A673 (cell line): ENCODE measurements at regions of chr14 and their contacts with region 1.

Region 1: GRCh38 chr14:52473557-52473956 is 78.7 kb downstream of the TXNDC16 start:
- DNase-seq: peak; percentile 29
- H3K4me3 ChIP-seq: no peak overlapping the region
- H3K27ac ChIP-seq: no peak overlapping the region
- H3K4me1 ChIP-seq: no peaks in the 10 kb centered on the region
- H3K27me3 ChIP-seq: no peaks in the 10 kb centered on the region
- CTCF ChIP-seq: peak; percentile 46; the same call in 1 of the 2 replicates

Region 2: DNA sequence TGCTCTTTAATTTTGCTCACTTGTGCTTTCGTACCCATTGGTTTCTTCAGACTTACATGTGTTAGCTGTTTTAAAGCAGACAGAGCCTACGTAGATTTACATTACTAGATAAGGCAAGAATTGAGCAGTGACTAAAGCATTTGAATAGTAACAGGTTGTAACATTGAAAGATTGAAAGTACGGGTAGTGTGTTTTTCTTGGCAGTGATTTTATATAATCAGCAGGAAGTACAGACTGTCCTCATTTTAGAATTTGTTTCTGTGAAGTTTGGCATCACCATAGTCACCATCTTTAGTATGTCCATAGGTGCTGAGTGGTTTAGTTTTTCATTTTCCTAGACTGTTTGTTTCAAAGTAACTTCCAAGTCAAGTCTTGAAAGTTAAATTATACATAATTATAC is 470.2 kb before region 1 on chr14:
- CTCF ChIA-PET with region 1: no interaction called
- POLR2A ChIA-PET with region 1: no interaction called
- intact Hi-C with region 1: loop called (anchors 10 kb)
- DNase-seq: no peak
- H3K4me3 ChIP-seq: no peak overlapping the region
- H3K27ac ChIP-seq: no peak overlapping the region
- H3K4me1 ChIP-seq: peaks cover 5% of the 10 kb centered on the region
- H3K27me3 ChIP-seq: no peaks in the 10 kb centered on the region
- CTCF ChIP-seq: no peak

Region 3: DNA sequence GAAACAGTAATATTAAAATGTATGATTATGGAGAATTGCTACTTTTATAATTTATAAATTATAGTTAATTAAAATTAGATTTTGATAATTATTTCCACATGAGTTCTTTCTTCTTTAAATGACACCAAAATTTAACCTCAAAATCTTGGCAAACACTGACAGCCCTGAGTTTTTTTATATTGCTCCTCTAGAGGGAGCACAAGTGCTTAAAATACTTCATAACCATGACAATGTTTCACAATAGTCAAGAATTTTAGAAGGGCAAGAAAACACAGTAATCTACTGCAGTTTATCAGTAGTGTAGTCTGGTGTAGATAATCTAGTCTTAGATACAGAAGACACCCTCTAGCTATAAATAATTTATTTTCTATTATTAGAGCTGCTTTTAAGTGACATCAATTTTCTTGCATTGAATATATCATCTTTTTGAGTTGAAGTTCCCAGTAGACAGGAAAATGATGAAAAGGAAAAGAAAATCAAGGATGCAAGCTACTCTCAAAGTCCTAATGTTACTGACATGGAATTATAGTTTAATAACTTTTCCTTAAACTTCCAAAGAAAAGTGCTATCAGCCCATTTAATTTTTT is 173.8 kb before region 1 on chr14:
- CTCF ChIA-PET with region 1: no interaction called
- POLR2A ChIA-PET with region 1: no interaction called
- intact Hi-C with region 1: loop called (anchors 2 kb)
- DNase-seq: peak; percentile 64
- H3K4me3 ChIP-seq: no peak overlapping the region
- H3K27ac ChIP-seq: no peak overlapping the region
- H3K4me1 ChIP-seq: no peaks in the 10 kb centered on the region
- H3K27me3 ChIP-seq: peaks cover 7% of the 10 kb centered on the region
- CTCF ChIP-seq: peak; percentile 76

Region 4: GRCh38 chr14:52313903-52314594 is 159.5 kb before region 1 on chr14 and contains the start of gene PTGER2:
- CTCF ChIA-PET with region 1: no interaction called
- POLR2A ChIA-PET with region 1: no interaction called
- intact Hi-C with region 1: loop called (anchors 5 kb)
- DNase-seq: peak; percentile 53
- H3K4me3 ChIP-seq: peak within 1 kb of the TSS; percentile 38
- H3K27ac ChIP-seq: no peak within 1 kb of the TSS
- H3K4me1 ChIP-seq: no peaks in the 10 kb centered on the region
- H3K27me3 ChIP-seq: peaks cover 64% of the 10 kb centered on the region
- CTCF ChIP-seq: no peak
- total RNA-seq, gene PTGER2: not detected in 2 replicates

Region 5: GRCh38 chr14:52563120-52563519 is 89.6 kb after region 1 on chr14:
- CTCF ChIA-PET with region 1: no interaction called
- POLR2A ChIA-PET with region 1: no interaction called
- intact Hi-C with region 1: no loop called
- DNase-seq: peak; percentile 29
- H3K4me3 ChIP-seq: no peak overlapping the region
- H3K27ac ChIP-seq: no peak overlapping the region
- H3K4me1 ChIP-seq: no peaks in the 10 kb centered on the region
- H3K27me3 ChIP-seq: no peaks in the 10 kb centered on the region
- CTCF ChIP-seq: no peak